ENCODE measurements at regions of chr3 and their contacts with region 1.

Region 1: GRCh38 chr3:16441371-16441875 is 72.1 kb downstream of the RFTN1 start:
- DNase-seq: no peak
- ATAC-seq: peak; percentile 54
- H3K4me3 ChIP-seq: no peak overlapping the region
- H3K27ac ChIP-seq: peak overlapping the region in 1 of 2 donors; percentile 54
- H3K4me1 ChIP-seq: peaks cover 4 to 11% of the 10 kb centered on the region in 2 donors
- H3K27me3 ChIP-seq: no peaks in the 10 kb centered on the region

Region 2: DNA sequence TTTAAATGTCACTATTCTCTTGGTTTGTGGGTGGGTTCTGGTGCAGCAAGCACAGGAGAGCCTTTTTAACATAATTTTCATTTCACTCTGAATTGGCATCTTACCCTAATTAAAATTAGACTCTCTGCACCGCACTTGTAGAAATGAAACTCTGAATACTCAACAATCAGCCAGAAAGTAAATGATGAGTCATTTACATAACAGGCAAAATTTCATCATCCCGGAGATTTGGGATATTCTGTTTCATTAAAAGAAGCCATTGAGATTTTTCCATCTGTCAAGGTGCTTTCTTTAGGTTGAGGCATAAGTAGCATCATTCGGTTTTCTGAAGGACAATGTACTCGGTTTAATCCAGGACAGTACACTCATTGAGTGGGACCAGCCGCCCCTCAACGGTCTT is 39.0 kb before region 1 on chr3:
- intact Hi-C with region 1: loop called in 1 of 2 experiments (anchors 5 kb)
- DNase-seq: no peak
- ATAC-seq: no peak
- H3K4me3 ChIP-seq: no peak overlapping the region
- H3K27ac ChIP-seq: no peak overlapping the region
- H3K4me1 ChIP-seq: peaks cover 0 to 3% of the 10 kb centered on the region in 2 donors
- H3K27me3 ChIP-seq: no peaks in the 10 kb centered on the region

Region 3: GRCh38 chr3:17307482-17307881 is 866.1 kb after region 1 on chr3:
- intact Hi-C with region 1: no loop called
- DNase-seq: no peak
- ATAC-seq: no peak
- H3K4me3 ChIP-seq: no peak overlapping the region
- H3K27ac ChIP-seq: no peak overlapping the region
- H3K4me1 ChIP-seq: peaks cover 0 to 2% of the 10 kb centered on the region in 2 donors
- H3K27me3 ChIP-seq: no peaks in the 10 kb centered on the region